Activated CD4-positive, alpha-beta T cell treated with anti-CD3 and anti-CD28 coated beads, Interleukin-2, amount 10 ng/mL, durations not matched to agents 24 days and 14 days (primary cell): ENCODE measurements at regions of chr3 and their contacts with region 1.

Region 1: GRCh38 chr3:192444096-192444790 is 283.1 kb downstream of the FGF12 start:
- DNase-seq: peak; percentile 87
- H3K4me3 Mint-ChIP-seq: no peak overlapping the region
- H3K27ac Mint-ChIP-seq: no peak overlapping the region
- H3K4me1 Mint-ChIP-seq: no peaks in the 10 kb centered on the region
- H3K27me3 Mint-ChIP-seq: peaks cover 17% of the 10 kb centered on the region

Region 2: DNA sequence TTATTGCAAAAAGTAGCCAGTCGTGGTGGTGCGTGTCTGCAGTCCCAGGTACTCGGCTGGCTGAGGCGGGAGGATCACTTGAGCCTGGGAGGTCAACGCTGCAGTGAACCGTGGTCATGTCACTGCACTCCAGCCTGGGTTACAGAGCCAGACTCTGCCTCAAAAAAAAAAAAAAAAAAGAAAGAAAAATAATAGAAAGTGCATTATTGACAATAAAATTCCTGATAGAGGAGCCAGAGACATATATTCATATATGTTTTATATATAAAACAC is 1026.8 kb before region 1 on chr3:
- intact Hi-C with region 1: loop called (anchors 2 kb)
- DNase-seq: no peak
- H3K4me3 Mint-ChIP-seq: no peak overlapping the region
- H3K27ac Mint-ChIP-seq: no peak overlapping the region
- H3K4me1 Mint-ChIP-seq: peaks cover 3% of the 10 kb centered on the region
- H3K27me3 Mint-ChIP-seq: no peaks in the 10 kb centered on the region

Region 3: DNA sequence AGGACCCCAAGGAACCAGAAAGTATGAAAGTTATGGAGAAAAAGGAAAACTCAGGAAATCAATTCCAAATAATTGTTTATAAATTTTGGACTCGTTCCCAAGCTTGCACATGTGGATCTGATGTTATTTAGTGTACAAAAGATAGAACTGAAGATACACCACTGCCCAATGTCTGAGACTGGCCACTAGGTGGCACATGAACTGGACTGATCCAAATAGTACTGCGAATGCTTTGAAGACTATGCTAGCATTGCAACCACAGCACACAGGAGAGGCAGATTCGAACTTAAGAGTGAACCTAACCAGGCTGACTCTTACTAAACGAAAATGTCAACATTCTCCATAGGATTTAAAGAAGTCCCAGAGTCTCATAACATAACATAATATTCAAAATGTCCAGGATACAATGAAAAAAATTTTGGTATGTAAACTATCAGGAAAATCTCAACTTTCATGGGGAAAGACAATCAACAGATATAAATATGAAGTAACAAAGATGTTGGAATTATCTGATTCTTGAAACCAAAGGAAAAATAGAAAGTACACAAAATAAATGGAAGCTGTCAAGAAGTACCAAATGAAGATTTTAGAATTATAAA is 313.6 kb before region 1 on chr3:
- intact Hi-C with region 1: loop called (anchors 2 kb)
- DNase-seq: peak; percentile 69
- H3K4me3 Mint-ChIP-seq: no peak overlapping the region
- H3K27ac Mint-ChIP-seq: no peak overlapping the region
- H3K4me1 Mint-ChIP-seq: no peaks in the 10 kb centered on the region
- H3K27me3 Mint-ChIP-seq: no peaks in the 10 kb centered on the region

Region 4: DNA sequence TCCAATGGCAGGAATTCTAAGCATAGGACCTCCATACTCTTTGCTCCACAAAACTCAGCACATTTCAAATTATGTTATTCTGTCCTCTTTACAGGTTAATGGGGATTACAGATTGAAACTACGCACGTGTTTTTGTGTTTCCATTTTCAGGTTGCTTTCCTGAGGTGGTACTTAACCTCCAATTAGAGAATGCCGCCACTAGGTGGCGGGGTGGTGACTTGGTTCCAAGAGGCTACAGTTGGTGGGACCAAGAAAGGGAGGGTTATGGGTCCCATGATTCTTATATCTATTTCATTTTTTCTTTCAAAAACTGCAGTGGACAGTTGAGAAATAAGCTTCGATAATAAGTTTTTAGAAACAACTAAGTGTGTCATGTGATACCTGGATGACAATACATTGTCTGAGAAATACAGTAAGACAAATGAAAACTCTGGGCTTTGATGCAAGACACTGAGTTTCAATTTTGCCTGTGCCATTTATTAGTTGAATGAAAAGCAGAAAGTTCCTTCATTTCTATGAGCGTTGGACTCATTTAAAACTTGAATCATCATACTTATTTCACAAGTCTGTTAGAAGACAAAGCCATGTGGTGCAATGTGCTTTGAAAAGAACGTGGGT is 255.9 kb before region 1 on chr3:
- intact Hi-C with region 1: loop called (anchors 1 kb)
- DNase-seq: peak; percentile 80
- H3K4me3 Mint-ChIP-seq: no peak overlapping the region
- H3K27ac Mint-ChIP-seq: no peak overlapping the region
- H3K4me1 Mint-ChIP-seq: no peaks in the 10 kb centered on the region
- H3K27me3 Mint-ChIP-seq: no peaks in the 10 kb centered on the region